Activated CD8-positive, alpha-beta T cell treated with anti-CD3 and anti-CD28 coated beads, Interleukin-2, amount 10 ng/mL, durations not matched to agents 7 days and 5 days (primary cell): ENCODE measurements at regions of chr2 and their contacts with region 1.

Region 1: DNA sequence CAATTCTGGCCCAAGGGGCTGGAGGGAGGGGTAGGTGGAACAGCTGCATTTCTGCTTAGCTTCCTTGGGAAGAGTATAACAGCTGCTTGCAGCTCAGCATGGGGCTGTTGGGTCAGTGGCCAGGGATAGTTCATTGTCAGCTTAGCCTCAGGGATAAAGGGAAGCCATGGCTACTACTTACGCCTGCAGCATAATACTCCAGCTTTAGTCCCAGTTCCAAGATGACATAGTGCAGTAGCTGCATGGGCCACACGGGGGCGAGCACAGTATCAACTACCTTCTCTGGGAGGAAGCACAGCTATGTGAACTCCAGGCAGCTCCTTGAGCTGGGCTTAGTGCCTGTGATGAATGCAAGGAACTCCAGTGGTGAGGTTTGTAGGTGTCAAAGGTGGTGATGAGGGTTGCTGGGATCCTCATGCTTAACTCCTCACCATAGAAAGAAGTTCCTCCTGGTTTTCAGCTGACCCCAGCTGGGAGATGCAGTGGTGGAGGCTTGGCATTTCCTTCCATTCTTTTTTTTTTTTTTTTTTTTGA is 35.4 kb upstream of the RHOB start:
- DNase-seq: peak; percentile 79
- ATAC-seq: peak; percentile 98
- H3K4me3 Mint-ChIP-seq: no peak overlapping the region
- H3K27ac Mint-ChIP-seq: no peak overlapping the region
- H3K4me1 Mint-ChIP-seq: no peaks in the 10 kb centered on the region
- H3K27me3 Mint-ChIP-seq: peaks cover 33% of the 10 kb centered on the region

Region 2: GRCh38 chr2:20350753-20351554 is 60.5 kb before region 1 on chr2 and contains the start of gene PUM2:
- CTCF ChIA-PET with region 1: interaction called, 13 read pairs
- POLR2A ChIA-PET with region 1: no interaction called
- DNase-seq: peak; percentile 95
- ATAC-seq: peak; percentile 86
- H3K4me3 Mint-ChIP-seq: peak within 1 kb of the TSS; percentile 78
- H3K27ac Mint-ChIP-seq: no peak within 1 kb of the TSS
- H3K4me1 Mint-ChIP-seq: peaks cover 29% of the 10 kb centered on the region
- H3K27me3 Mint-ChIP-seq: no peaks in the 10 kb centered on the region
- total RNA-seq, gene PUM2: 123 to 129 TPM

Region 3: GRCh38 chr2:20377741-20378140 is 33.7 kb before region 1 on chr2:
- CTCF ChIA-PET with region 1: no interaction called
- POLR2A ChIA-PET with region 1: no interaction called
- DNase-seq: no peak
- ATAC-seq: no peak
- H3K4me3 Mint-ChIP-seq: no peak overlapping the region
- H3K27ac Mint-ChIP-seq: no peak overlapping the region
- H3K4me1 Mint-ChIP-seq: no peaks in the 10 kb centered on the region
- H3K27me3 Mint-ChIP-seq: peaks cover 17% of the 10 kb centered on the region

Region 4: DNA sequence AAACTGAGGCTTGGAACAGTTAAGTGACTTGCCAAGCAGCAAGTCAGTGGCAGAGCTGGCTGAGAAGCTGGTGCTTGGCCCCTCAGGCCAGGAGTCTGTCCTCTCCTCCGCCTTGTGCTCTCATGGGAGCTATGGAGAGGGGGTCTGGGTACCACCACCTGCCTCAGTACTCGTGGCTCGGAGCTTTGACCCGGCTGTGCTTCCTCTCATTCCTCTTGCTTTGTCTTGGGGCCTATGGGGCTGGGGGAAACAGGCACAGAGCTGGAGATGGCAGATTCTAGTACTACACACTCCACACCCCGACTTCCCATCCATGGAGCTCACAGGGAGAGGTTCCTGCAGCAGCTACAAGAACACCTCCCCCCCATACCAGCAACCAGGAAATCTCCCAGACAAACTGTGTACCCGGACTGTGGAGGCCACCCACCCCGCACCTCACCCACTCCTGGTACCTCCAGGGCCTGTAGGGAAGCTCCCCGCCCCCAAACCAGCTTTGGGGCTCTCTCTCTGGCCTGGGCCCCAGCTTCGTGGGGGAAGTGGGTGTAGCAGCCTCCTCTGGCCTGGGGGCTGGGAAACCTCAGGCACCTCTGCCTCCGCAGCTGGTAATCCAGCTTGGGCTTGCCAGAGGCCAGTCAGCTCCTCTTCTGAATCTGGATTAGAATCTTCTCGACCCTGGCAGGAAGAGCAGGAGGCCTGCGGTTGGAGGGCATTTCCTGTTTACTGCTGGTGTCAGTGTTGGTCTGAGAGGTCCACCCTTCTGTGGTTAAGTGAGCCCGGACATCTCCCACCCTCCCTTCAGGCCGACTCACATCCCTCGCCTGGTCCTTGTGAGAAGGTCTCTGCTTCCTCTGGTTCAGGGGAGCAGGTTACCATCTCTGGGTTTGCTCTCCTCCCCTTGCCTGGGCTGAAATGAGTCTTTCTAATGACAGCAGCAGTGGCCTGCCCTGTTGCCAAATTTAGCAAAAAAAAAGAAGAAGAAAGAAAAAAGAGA is 13.2 kb after region 1 on chr2:
- CTCF ChIA-PET with region 1: interaction called, 82 read pairs
- POLR2A ChIA-PET with region 1: no interaction called
- DNase-seq: peak; percentile 43
- ATAC-seq: peak; percentile 56
- H3K4me3 Mint-ChIP-seq: peak overlapping the region; percentile 6
- H3K27ac Mint-ChIP-seq: peak overlapping the region; percentile 79
- H3K4me1 Mint-ChIP-seq: peaks cover 19% of the 10 kb centered on the region
- H3K27me3 Mint-ChIP-seq: peaks cover 6% of the 10 kb centered on the region

Region 5: GRCh38 chr2:20430461-20431300 is 19.3 kb after region 1 on chr2:
- CTCF ChIA-PET with region 1: interaction called, 82 read pairs
- POLR2A ChIA-PET with region 1: no interaction called
- DNase-seq: no peak
- ATAC-seq: no peak
- H3K4me3 Mint-ChIP-seq: no peak overlapping the region
- H3K27ac Mint-ChIP-seq: no peak overlapping the region
- H3K4me1 Mint-ChIP-seq: no peaks in the 10 kb centered on the region
- H3K27me3 Mint-ChIP-seq: peaks cover 11% of the 10 kb centered on the region

Region 6: GRCh38 chr2:20438334-20439192 is 27.1 kb after region 1 on chr2:
- CTCF ChIA-PET with region 1: interaction called, 14 read pairs
- POLR2A ChIA-PET with region 1: no interaction called
- DNase-seq: no peak
- ATAC-seq: no peak
- H3K4me3 Mint-ChIP-seq: no peak overlapping the region
- H3K27ac Mint-ChIP-seq: no peak overlapping the region
- H3K4me1 Mint-ChIP-seq: no peaks in the 10 kb centered on the region
- H3K27me3 Mint-ChIP-seq: peaks cover 30% of the 10 kb centered on the region

Region 7: DNA sequence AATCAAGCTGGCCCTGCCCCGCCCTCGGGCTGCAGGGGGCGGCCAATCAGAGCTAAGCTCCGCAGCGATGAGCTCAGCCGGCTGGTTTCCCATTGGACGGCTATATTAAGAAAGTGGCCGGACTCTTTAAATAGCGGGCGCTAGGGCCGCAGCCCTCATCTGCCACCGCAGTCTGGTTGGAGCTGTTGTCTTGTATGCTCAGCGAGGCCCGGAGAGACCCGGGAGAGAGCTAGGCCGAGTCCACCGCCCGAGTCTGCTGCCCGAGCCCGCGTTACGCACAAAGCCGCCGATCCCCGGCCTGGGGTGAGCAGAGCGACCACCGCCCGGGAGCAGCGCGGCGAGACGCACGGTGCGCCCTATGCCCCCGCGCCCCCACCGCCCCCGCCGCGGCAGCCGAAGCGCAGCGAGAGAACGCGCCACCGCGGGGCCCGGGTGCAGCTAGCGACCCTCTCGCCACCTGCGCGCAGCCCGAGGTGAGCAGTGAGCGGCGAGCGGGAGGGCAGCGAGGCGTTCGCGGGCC is 35.5 kb after region 1 on chr2 and contains the start of gene RHOB:
- CTCF ChIA-PET with region 1: interaction called, 14 read pairs
- POLR2A ChIA-PET with region 1: no interaction called
- DNase-seq: peak; percentile 91
- ATAC-seq: peak; percentile 98
- H3K4me3 Mint-ChIP-seq: peak within 1 kb of the TSS; percentile 63
- H3K27ac Mint-ChIP-seq: peak within 1 kb of the TSS; percentile 43
- H3K4me1 Mint-ChIP-seq: peaks cover 4% of the 10 kb centered on the region
- H3K27me3 Mint-ChIP-seq: peaks cover 39% of the 10 kb centered on the region
- total RNA-seq, gene RHOB: 1.2 to 1.3 TPM

Region 8: GRCh38 chr2:20466417-20466911 is 55.0 kb after region 1 on chr2:
- CTCF ChIA-PET with region 1: no interaction called
- POLR2A ChIA-PET with region 1: no interaction called
- DNase-seq: no peak
- ATAC-seq: no peak
- H3K4me3 Mint-ChIP-seq: no peak overlapping the region
- H3K27ac Mint-ChIP-seq: no peak overlapping the region
- H3K4me1 Mint-ChIP-seq: no peaks in the 10 kb centered on the region
- H3K27me3 Mint-ChIP-seq: peaks cover 19% of the 10 kb centered on the region

Region 9: GRCh38 chr2:20642055-20642971 is 230.9 kb after region 1 on chr2:
- CTCF ChIA-PET with region 1: interaction called, 49 read pairs
- POLR2A ChIA-PET with region 1: no interaction called
- DNase-seq: peak; percentile 78
- ATAC-seq: peak; percentile 97
- H3K4me3 Mint-ChIP-seq: no peak overlapping the region
- H3K27ac Mint-ChIP-seq: no peak overlapping the region
- H3K4me1 Mint-ChIP-seq: no peaks in the 10 kb centered on the region
- H3K27me3 Mint-ChIP-seq: no peaks in the 10 kb centered on the region